ENCODE measurements at regions of chr17 and their contacts with region 1.

Region 1: GRCh38 chr17:38557836-38558727 is 47.7 kb downstream of the SRCIN1 start:
- DNase-seq: peak; percentile 93
- CTCF ChIP-seq: peak; percentile 96

Region 2: DNA sequence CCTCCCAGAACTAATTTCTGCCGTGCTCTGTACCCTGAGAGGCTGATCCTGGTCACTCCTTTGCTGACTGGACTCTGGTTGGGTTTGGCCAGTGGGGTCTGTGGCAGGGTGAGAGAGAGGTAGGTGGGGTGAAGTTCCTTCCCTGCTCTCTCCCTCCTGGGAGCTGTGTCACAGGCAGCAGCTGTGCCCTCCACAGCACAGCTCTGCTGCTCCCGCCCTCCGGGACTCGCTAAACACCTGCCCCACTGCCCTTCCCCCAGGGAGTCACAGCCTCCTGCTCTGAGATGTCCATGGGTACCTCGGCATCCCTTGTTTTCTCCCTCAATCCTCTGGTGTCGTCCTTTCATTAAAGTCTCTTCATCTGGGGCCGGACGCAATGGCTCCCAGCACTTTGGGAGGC is 18.7 kb before region 1 on chr17:
- CTCF ChIA-PET with region 1: interaction called, 77 read pairs
- POLR2A ChIA-PET with region 1: no interaction called
- DNase-seq: no peak
- CTCF ChIP-seq: no peak

Region 3: DNA sequence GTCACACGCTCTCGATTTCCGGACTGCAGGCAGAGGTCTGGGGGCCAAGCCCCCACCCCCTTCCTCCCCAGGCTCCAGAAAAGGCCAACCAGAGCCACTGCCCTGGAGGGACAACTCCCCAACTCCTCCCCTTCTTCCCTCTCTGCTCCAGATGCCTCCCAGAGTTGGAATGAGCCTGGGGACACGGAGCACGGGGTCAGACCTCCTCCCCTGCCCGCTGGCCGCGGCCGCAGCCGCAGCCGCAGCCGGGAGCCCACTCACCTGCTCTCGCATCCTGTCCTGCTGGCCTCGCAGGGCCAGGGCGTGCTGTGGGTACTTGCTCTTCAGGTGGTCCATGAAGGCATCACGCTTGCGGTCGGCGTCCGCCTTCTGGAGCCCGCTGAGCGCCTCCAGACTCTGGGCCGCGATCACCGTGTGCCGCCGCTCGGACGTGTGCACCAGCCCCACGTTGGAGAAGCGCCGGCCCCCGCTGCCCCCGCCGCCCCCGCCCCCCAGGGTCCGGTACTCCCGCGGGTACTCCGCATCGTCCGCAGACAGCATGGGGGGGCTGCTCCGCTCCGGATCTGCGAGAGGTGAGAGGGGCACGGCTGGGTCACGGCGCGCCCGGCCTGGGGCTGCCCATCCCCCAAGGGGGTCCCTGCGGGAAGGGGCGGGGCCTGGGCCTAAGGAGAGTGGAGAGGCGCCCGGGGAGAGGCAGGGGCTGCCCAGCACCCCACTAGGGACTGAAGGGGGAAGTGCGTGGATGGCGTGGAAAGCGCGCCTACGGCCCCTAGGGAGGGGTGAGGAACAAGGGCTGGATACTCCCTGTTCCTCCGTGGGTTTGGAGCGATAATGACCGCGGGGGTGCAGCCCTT is 20.4 kb after region 1 on chr17:
- CTCF ChIA-PET with region 1: interaction called, 117 read pairs
- POLR2A ChIA-PET with region 1: interaction called, 4 read pairs
- DNase-seq: no peak
- CTCF ChIP-seq: no peak

Region 4: DNA sequence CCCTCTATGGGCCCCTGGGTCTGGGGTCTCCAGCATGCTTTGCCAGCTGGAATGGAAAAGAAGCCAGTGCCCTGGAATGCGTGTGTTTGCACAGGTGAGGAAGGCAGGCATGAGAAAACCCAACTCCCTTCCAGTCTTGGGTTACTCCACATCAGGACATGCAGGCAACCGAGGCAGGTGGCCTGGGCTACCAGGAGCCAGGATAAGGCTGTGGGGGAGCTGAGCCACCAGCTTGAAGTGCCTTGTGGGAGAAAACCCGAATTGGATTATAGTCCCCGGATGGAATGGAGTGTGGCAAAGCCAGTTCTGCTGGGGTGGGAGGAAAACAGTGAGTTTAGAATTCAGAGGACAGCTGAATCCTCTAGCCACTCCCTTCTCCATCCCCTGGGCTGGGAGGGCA is 40.5 kb after region 1 on chr17:
- CTCF ChIA-PET with region 1: interaction called, 21 read pairs
- POLR2A ChIA-PET with region 1: no interaction called
- DNase-seq: peak; percentile 58
- CTCF ChIP-seq: no peak

Region 5: GRCh38 chr17:38667099-38667786 is 109.2 kb after region 1 on chr17:
- CTCF ChIA-PET with region 1: interaction called, 416 read pairs
- POLR2A ChIA-PET with region 1: interaction called, 8 read pairs
- DNase-seq: peak; percentile 79
- CTCF ChIP-seq: peak; percentile 100

Region 6: GRCh38 chr17:38735161-38735997 is 177.3 kb after region 1 on chr17:
- CTCF ChIA-PET with region 1: interaction called, 16 read pairs
- POLR2A ChIA-PET with region 1: no interaction called
- DNase-seq: peak; percentile 87
- CTCF ChIP-seq: peak; percentile 94